Mammary epithelial cell (primary cell): ENCODE measurements at regions of chr6 and their contacts with region 1.

Region 1: DNA sequence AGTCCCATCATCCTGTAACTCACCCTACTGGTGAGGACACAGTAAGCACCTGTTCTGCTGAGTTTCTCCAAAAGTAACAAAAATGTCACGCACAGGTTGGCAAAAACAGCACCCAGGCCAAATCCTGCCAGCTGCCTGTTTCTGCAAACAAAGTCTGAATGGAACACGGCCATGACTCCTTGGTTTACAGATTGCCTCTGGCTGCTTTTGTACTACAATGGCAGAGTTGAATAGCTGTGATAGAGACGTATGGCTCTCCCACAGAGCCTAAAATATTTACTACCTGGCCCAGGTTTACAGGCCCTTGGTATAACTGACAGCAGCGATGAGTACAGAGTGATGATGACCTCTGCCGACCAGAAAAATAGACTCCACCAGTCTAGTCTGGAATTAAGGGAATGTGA is 52.6 kb downstream of the CNKSR3 start:
- DNase-seq: peak; percentile 58
- H3K4me3 ChIP-seq: no peak overlapping the region
- H3K27ac ChIP-seq: no peak overlapping the region
- H3K4me1 ChIP-seq: peaks cover 26% of the 10 kb centered on the region
- H3K27me3 ChIP-seq: no peaks in the 10 kb centered on the region
- CTCF ChIP-seq: peak in 1 of 2 donors; percentile 26

Region 2: DNA sequence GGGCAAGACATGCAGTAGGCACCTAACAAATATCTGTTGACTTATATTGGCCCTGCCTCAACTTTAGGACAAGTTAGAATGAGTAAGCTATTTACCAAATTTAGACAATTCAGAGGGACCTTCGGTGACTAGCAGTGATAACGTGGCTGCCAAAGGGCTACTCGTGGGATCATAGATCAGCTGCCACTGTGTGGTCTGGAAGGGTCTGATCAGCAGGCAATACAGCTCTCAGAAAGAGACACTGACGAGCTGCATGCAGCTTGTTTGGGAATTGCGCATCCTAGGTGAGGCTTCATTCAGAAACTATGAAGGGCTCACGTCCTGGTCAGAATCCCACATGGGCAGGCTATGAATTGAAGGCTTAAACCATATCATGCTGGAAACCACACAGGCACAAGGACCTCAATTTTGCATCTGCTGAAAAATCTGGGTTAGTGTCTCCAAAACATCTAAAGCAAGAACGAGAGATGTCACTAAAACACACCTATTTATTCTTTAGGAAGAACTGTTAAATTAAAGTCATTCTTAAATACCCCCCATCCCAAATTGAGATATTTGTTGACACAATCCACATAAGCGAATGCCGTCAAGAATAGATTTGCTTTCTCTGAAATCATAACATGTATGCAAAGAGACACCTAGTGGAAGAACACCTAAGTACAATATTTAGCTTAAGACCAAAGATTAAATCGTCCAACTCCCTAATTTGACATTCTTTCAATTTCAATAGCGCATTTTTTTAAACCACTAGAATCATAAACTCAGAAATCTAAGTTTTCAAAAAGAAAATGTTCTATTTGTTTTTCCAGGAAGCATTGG is 180.9 kb before region 1 on chr6:
- CTCF ChIA-PET with region 1: interaction called, 4 read pairs
- dilution Hi-C with region 1: no loop called
- in situ Hi-C with region 1: no loop called
- intact Hi-C with region 1: loop called (anchors 1 kb)
- DNase-seq: no peak
- H3K4me3 ChIP-seq: peak overlapping the region; percentile 30 to 53 (median 43)
- H3K27ac ChIP-seq: no peak overlapping the region
- H3K4me1 ChIP-seq: no peaks in the 10 kb centered on the region
- H3K27me3 ChIP-seq: no peaks in the 10 kb centered on the region
- CTCF ChIP-seq: peak; percentile 60 to 65

Region 3: DNA sequence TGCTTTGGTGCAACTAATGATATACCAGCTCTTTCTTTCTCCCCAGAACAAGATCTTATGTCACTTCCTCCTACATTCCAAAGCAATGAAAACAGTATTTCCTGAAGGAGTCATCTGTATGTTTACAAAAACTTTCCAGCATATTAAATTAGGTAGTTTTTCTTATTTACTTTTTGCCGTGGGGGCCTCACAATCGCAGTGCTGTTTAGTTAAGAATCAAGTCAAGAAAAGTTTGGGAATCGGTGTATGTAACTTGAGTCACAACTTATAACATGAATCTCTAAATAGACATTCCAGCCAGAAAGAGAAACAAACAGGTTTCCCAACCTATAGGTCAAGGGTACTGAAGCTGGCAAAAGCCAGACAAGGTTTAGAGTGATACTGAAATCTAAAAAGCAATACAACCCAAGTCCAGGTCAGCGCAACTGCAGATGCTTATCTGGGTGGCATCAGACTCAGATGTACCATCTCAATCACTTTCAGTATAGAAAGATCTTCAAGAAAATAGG is 164.9 kb before region 1 on chr6:
- CTCF ChIA-PET with region 1: no interaction called
- dilution Hi-C with region 1: no loop called
- in situ Hi-C with region 1: no loop called
- intact Hi-C with region 1: loop called (anchors 5 kb)
- DNase-seq: peak; percentile 52
- H3K4me3 ChIP-seq: no peak overlapping the region
- H3K27ac ChIP-seq: no peak overlapping the region
- H3K4me1 ChIP-seq: no peaks in the 10 kb centered on the region
- H3K27me3 ChIP-seq: no peaks in the 10 kb centered on the region
- CTCF ChIP-seq: no peak

Region 4: DNA sequence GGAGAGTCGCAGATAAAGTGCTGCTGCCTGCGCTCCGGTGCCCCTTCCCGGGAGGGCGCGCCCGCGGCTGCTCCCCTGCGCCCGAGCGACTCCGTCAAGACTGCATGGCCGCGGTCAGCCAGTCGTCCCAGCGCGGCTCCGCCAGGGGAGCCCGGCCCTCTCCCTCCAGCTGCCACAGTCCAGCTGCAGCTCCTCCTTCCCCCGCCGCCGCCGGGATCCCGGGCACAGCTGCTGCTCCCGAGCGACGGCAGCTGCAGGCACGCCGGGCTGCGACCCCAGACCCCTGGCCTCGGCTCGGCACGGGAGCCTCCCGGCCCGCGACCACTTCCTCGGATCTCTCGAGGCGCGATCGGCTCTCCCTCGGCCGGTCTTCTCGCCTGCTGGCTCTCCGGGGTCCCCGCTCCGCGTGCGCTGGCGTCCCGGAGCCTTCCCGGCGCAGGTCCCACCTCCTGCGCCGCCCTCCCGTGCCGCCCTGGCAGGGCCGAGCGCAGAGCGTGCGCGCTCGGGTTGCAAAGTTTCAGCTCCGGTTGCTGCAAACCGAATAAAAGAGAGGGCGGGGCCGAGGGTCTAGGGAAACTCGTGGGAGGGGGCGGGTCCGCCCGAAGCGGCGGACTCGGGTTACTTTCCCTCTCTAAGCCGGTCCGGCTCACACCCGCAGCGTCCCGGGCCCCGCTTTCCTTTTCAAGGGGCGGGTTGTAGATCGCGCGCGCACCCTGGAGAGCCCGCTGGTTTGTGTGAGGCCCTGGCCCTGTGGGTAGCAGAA is 52.4 kb after region 1 on chr6 and contains the start of gene CNKSR3:
- CTCF ChIA-PET with region 1: no interaction called
- dilution Hi-C with region 1: no loop called
- in situ Hi-C with region 1: no loop called
- intact Hi-C with region 1: no loop called
- DNase-seq: peak; percentile 87
- H3K4me3 ChIP-seq: peak within 1 kb of the TSS; percentile 76 to 82 (median 79)
- H3K27ac ChIP-seq: peak within 1 kb of the TSS; percentile 49
- H3K4me1 ChIP-seq: peaks cover 14% of the 10 kb centered on the region
- H3K27me3 ChIP-seq: peaks cover 1% of the 10 kb centered on the region
- CTCF ChIP-seq: peak in 1 of 2 donors; percentile 23
- total RNA-seq, gene CNKSR3: 1.7 to 4.1 TPM